Activated T-helper 1 cell treated with anti-CD3 and anti-CD28 coated beads, Interleukin-12 subunit alpha, Interleukin-12 subunit beta, Interleukin-2, Interleukin-4 antibody, amounts not matched to agents 30 ng/mL and 10 ng/mL and 1 ng/mL, durations not matched to agents 14 hours and 24 hours and 36 hours (primary cell): ENCODE measurements at regions of chr3 and their contacts with region 1.

Region 1: DNA sequence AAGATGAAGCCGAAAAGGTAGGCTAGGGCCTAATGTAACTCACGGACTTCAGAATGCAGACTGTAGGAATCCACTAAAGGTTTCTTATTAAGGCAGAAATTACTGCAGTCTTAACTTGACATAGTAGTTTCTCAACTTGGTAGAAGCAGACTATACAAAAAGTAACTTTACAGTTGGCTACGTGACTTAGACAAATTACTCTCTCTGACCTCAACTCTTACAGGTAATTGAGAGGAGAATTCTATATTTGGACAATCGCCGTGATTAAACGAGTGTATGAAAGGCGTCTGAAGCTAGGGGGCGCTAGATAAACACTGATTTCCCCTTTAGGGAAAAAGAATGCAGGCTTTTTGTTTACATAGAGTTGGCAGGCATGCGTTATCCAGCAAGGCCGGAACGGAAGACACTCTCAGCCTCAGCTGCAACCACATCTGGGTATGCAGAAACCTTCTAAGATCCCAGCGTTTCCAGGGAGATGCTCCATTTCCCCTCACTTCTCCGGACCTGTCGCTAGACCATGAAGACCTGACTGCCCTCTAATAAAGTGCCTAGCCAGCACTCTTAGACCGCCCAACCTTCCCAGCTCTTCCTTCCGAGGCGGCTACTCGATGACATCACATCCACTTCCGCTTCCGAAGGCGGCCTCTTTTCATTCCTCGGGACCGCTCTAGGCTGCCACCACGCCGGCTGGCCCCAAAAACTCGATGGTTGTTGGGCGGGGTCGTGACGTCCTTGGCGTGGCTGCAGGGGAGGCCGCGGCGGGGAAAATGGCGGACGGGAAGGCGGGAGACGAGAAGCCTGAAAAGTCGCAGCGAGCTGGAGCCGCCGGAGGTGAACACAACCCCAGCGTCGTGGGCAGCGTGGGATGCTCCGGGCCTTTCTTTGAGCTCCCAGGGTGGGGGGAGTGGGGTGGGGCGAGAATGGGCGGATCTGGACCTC is at the start of gene PCNP:
- DNase-seq: peak; percentile 99
- H3K4me3 Mint-ChIP-seq: peak within 1 kb of the TSS; percentile 94
- H3K27ac Mint-ChIP-seq: peak within 1 kb of the TSS; percentile 99
- H3K4me1 Mint-ChIP-seq: peaks cover 68% of the 10 kb centered on the region
- H3K27me3 Mint-ChIP-seq: no peaks in the 10 kb centered on the region
- total RNA-seq, gene PCNP: 182 and 190 TPM in 2 replicates

Region 2: GRCh38 chr3:100400780-100401673 is 1172.7 kb before region 1 on chr3 and contains the starts of genes LNP1 and TOMM70:
- intact Hi-C with region 1: loop called (anchors 2 kb)
- DNase-seq: peak; percentile 91
- H3K4me3 Mint-ChIP-seq: peak within 1 kb of the TSS; percentile 96
- H3K27ac Mint-ChIP-seq: peak within 1 kb of the TSS; percentile 99
- H3K4me1 Mint-ChIP-seq: peaks cover 60% of the 10 kb centered on the region
- H3K27me3 Mint-ChIP-seq: peaks cover 2% of the 10 kb centered on the region
- total RNA-seq, gene LNP1: 2.4 and 2.6 TPM in 2 replicates
- total RNA-seq, gene TOMM70: 60.0 and 62.9 TPM in 2 replicates

Region 3: DNA sequence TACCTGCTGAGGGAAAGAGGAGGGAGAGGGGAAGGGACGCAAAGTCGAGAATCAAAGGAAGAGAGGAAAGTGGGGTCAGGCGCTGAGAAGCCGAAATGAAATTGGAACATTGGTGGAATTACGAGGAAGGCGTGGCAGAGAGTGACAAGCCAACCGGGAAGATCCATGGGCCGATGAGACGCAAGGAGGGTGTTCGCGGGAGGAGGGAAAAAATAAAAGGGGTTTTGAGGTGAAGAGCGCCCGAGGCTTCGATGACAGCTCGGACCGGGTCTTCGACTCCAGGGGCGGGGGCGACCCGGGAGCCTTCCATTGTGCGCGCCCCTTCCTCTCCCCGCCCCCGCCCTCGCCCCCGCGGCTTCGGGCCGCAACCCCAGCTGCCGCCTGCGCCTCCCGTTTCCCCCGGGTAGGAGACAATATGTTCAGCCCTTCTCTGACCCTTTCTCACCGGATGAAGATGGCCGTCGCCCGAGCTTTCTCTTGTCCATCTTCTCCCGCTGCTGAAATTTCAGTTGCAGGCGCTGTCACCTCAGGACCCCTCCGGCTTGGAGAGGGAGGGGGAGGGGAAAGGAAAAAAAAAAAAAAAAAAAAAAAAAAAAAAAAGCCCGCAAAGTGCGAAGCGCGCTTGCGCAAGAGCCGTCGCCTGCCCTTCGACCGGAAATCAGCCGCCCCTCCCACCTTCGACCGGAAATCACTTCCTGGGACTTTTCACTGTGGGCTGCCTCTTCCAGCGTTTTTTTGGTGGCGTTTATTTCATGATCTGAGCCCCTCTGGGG is 60.9 kb before region 1 on chr3 and contains the start of gene SENP7:
- intact Hi-C with region 1: loop called (anchors 1 kb)
- DNase-seq: peak; percentile 72
- H3K4me3 Mint-ChIP-seq: peak within 1 kb of the TSS; percentile 94
- H3K27ac Mint-ChIP-seq: peak within 1 kb of the TSS; percentile 95
- H3K4me1 Mint-ChIP-seq: peaks cover 31% of the 10 kb centered on the region
- H3K27me3 Mint-ChIP-seq: no peaks in the 10 kb centered on the region
- total RNA-seq, gene SENP7: 9.1 and 10.7 TPM in 2 replicates

Region 4: DNA sequence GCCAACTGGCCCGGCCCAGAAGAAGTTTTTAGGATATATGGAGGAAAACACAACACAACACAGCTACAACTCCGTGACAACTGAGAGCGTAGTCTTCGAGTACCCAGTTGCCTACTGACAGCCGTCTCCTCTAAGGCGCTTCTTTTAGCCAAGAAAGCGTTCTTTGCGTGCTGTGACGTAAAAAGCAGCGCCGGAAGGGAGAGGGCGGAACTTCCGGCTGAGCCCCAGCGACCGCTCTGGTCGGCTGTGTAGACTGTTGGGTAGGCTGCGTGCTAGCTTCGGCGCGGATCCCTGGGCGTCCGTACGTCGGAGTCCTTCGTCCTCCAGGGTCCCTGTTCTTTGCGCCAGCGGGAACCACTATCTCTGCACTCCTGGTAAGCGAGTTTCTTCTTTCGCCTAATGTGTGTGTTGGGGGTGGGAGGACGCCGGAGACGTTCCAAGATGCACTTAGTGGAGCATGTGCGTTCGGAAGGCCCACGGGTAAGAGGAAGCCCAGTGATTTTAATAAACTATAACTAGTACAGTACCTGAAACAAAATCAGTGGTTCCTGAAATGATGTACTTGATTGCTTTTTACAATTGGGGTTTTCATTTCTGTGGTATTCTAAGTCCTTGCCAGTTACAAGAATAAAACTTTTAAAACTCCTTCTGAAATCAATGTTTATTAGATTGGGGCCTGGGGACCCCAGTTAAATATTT is 11.9 kb before region 1 on chr3 and contains the start of gene TRMT10C:
- intact Hi-C with region 1: loop called (anchors 1 kb)
- DNase-seq: peak; percentile 89
- H3K4me3 Mint-ChIP-seq: peak within 1 kb of the TSS; percentile 99
- H3K27ac Mint-ChIP-seq: peak within 1 kb of the TSS; percentile 98
- H3K4me1 Mint-ChIP-seq: peaks cover 34% of the 10 kb centered on the region
- H3K27me3 Mint-ChIP-seq: peaks cover 4% of the 10 kb centered on the region
- total RNA-seq, gene TRMT10C: 59.9 and 60.5 TPM in 2 replicates

Region 5: GRCh38 chr3:101685870-101686412 is 112.2 kb after region 1 on chr3:
- intact Hi-C with region 1: loop called (anchors 2 kb)
- DNase-seq: no peak
- H3K4me3 Mint-ChIP-seq: peak overlapping the region; percentile 99
- H3K27ac Mint-ChIP-seq: peak overlapping the region; percentile 97
- H3K4me1 Mint-ChIP-seq: peaks cover 29% of the 10 kb centered on the region
- H3K27me3 Mint-ChIP-seq: no peaks in the 10 kb centered on the region

Region 6: DNA sequence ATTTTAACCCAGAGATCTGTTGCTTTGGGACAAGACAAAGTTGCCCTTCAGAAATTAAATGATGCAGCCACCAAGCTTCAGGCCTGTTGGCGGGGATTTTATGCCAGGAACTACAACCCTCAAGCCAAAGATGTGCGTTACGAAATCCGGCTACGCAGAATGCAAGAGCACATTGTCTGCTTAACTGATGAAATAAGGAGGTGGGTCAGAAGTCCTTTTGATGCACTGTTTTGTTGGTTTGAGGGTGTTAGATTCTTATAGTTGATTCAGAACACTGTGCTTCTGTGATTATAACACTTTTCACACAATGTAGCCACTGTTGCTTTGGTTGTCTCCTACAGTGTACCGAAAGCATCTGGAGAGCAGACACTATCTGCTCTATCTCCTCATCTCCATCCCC is 184.5 kb after region 1 on chr3:
- intact Hi-C with region 1: no loop called
- DNase-seq: no peak
- H3K4me3 Mint-ChIP-seq: no peak overlapping the region
- H3K27ac Mint-ChIP-seq: no peak overlapping the region
- H3K4me1 Mint-ChIP-seq: peaks cover 19% of the 10 kb centered on the region
- H3K27me3 Mint-ChIP-seq: no peaks in the 10 kb centered on the region

Region 7: DNA sequence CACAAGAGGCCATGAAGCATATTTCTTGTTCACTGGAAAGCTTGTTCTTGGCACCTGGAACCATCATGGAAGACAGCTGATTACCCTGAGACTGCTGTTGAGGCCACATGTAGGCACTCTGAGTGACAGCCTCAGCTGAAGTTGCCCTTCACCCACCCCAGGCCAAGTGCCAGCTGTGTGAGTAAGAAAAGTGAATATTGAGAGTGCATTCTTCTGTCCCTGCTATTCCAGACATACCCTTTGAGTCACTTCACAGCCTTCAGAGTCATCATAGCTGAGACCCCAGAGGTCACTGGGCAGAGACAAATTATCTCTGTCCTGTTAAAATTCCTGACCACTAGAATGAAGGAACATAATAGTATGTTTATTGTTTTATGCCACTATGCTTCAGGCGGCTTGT is 355.2 kb after region 1 on chr3:
- intact Hi-C with region 1: no loop called
- DNase-seq: no peak
- H3K4me3 Mint-ChIP-seq: no peak overlapping the region
- H3K27ac Mint-ChIP-seq: no peak overlapping the region
- H3K4me1 Mint-ChIP-seq: peaks cover 35% of the 10 kb centered on the region
- H3K27me3 Mint-ChIP-seq: peaks cover 10% of the 10 kb centered on the region